ENCODE measurements at regions of chr6 and their contacts with region 1.

Region 1: DNA sequence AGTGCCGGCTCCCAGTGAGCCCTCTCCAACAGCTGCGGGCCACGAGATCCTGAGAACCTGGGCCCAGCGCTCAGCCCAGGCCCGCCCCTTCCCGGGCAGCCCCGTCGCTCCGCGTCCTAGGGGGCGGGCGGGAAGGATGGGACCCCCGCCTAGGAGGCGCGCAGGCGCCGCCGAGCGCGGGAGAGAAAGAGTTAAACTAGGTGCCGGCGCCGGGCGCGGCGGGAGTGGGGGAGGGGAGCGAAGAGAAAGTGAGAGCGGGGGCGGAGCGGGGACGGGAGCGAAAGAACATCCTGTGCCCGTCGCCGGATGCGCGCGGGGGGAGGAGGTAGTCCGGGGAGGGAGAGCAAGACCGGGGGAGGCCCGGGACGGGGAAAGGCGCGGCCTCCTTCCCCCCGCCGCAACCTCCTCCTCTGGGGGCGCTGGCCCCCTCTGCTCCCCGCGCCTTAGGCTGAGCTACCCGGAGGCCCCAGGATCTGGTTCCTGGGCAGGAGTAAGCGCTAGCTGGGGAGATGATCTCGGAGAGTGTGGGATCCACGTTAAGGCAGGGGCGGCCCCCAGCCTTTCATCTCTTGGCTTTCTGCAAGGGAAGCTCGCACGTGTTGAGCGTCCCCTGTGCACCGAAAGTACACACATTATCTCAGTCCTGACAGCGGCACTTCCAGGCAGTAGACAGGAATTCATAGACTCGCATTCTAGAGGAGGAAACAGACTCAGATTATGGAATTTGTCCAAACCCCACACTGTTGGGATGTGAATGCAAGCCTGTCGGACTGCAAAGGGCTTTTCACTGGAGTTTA is 4.9 kb upstream of the ARMC12 start:
- DNase-seq: peak; percentile 98 to 99
- ATAC-seq: peak; percentile 60

Region 2: DNA sequence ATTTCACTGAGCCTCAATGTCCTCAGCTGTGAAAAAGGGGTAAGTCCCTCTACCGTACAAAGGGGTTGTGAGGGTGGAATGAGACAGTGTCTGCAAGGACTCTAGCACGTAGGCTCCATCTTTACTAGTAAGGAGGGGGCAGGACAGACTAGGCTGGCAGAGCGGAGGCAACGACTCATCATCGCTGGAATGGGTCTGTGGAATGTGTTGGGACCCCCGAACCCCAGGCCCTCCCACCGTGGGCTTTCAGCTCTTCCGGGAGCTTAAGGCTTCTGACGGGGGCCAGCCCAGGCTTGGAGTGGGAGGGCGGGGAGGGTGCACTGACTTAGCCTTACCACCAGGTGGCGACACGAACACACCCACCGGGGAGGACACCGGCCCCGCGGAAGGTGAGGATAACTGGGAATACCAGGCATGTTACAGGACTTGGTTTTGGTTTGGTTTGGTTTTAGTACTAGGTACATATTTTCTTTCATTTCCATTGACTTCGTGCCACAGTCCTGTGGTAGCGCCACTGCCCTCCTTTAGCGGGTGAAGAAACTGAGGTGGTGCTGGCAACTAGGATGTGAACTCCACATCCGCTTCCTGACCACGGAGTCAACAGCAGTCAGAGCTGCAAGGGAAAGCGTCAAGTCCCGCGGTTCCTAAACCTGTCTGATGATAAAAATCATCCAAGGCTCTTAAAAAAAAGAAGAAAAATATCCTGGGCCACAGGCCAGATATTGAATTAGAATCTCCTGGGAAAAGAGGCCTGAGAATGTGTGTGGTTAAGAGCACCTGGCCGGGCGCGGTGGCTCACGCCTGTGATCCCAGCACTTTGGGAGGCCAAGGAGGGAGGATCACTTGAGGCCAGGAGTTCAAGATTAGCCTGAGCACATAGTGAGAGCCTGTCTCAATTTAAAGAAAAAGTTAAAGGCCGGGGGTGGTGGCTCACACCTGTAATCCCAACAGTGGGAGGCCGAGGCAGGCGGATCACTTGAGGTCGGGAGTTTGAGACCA is 209.0 kb before region 1 on chr6:
- intact Hi-C with region 1: loop called (anchors 2 to 10 kb)
- DNase-seq: peak; percentile 49 to 70
- ATAC-seq: peak; percentile 91

Region 3: GRCh38 chr6:35552285-35552917 is 179.5 kb before region 1 on chr6:
- intact Hi-C with region 1: no loop called
- DNase-seq: peak in 1 of 2 donors; percentile 50
- ATAC-seq: peak; percentile 42

Region 4: DNA sequence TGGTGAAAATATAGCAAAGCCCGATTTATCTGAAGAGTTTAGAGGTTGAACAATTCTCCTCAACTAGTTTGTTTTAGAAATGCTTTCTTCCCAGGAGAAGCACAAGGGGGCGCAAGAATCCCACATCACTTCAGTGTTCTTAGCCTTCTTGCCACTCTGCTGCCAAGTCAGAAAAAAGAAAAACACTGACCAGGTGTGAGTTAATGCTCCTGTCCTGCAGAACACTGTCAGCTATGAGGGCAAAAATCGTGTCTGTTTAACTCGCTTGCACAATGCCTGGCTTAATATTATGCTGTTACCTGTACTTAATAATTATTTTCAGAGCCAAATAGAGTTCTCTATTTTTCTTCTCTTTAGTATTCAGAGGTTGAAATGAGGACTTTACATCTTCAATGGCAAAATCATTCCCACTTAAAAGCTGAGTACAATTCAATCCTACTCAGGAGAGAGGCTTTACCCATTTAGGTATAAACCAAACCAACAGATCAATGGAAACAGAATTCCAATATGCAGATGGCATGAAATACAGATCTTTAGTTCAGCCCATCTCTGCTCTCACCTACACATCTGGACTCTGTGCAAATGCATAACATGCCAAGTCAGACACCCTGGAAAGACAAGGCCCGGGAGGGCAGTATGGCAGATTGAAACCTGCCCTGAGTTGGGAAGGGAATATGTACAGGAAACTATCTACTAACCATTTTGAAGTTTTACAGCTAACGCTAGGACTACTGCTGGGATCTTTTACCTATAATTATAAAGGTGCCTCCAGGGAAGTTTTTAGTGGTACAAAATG is 147.8 kb before region 1 on chr6:
- intact Hi-C with region 1: loop called (anchors 5 kb)
- DNase-seq: peak; percentile 65 to 71
- ATAC-seq: peak; percentile 78

Region 5: GRCh38 chr6:35601331-35602132 is 130.4 kb before region 1 on chr6:
- intact Hi-C with region 1: loop called in 1 of 2 experiments (anchors 5 kb)
- DNase-seq: peak in 1 of 2 donors; percentile 62
- ATAC-seq: peak; percentile 24

Region 6: DNA sequence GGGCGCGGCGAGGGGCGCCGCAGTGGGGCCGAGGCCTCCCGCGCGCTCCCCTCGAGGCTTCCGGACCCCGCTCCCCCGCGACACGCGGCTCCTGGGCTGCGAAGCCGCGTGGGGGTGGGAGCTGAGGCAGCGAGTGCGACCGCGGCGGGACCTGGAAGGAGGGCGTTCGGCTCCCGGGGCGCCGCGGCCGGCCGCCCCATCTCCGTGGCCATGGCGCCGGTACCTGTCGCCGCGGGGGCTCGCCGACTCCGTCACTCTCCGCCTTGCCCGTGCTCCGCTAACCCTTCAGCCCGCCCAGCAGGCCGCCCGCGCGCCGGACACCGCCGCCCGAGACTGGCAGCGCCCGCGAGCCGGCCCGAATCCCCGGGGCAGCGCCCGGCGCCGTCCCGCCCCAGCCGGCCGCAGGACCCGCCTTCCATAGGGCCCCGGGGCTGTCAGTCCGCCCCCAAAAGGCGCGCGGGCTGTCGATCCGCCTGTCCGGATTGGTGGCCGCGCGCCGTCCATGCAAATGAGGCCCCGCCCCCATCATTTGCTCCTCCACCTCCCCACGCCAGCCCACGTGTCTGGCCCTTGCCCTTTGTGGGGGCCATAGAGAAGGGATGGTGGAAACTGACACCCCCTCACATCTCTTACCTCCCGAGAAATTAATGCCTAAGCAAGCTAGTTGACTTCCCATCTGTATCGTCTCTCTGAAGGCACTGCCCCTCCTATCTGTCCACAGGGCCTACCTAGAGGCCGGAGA is 43.2 kb before region 1 on chr6 and contains the start of gene FKBP5:
- intact Hi-C with region 1: loop called in 1 of 2 experiments (anchors 5 kb)
- DNase-seq: peak; percentile 97
- ATAC-seq: peak; percentile 87
- total RNA-seq, gene FKBP5: 40.3 to 252 TPM